Endothelial cell of umbilical vein (primary cell): ENCODE measurements at regions of chr9 and their contacts with region 1.

Region 1: DNA sequence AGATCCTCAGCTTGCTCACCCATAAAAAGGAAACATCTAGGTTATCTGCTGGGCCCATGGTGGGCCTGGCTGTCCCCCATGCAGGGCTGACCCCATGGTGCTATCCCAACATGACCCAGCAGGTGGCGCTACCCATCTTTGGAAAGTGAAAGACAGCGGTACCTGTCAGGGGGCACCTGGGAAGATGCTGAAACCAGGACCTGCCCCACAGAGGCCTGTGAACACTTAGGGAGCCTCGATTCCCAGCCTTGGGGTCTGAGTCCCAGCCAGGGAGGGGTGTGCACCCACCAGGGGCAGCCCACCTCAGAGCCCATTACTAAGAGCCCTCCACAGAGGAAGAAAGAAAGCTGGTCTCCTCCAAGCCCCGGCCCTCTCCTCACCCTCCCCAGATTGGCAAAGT is 46.6 kb upstream of the IPPK start:
- DNase-seq: peak; percentile 50
- H3K4me3 ChIP-seq: no peak overlapping the region
- H3K27ac ChIP-seq: no peak overlapping the region
- H3K4me1 ChIP-seq: peaks cover 5% of the 10 kb centered on the region
- H3K27me3 ChIP-seq: no peaks in the 10 kb centered on the region
- CTCF ChIP-seq: peak; percentile 87 to 89
- POLR2A ChIP-seq: no peak

Region 2: DNA sequence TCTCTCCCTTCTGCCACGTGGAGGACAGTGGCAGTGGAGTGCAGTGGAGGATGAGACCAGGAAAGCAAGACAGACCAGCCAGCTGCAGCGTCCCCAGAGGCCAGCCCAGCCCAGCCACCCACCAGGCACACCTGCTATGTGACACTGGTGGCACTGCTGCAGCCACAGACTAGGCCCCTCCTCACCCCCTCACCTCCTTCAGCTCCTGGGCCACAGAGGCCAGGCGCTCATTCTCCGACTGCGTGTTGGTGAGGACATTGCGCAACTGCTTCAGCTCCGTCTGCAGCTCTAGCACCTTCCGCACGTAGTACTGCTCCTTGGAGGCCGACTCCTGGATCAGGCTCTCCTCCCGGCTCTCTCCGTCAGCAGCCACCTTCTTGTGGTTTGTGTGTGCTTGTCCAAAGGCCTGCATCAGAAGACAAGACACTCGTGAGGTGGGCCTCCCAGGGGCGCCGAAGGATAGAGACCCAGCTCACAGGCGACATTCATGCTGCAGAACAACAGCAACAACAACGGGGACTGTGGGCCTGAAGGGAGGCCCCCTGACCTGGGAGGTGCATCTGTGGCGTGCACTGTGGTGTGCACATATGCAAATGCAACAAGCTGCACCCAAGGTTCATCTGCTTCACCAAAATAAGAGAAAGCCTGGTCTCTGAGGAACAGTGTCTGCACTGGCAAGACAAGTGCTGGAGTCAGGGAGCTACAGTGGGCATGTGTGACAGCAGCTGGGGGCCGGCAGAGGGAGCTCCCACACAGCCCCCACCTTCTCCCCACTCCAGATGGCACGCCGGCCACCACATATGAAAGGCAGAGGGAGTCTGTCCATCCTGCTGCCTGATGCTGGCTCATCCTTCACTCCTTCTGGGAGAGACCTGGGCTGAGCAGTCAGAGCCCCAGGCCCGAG is 12.5 kb after region 1 on chr9:
- CTCF ChIA-PET with region 1: interaction called, 13 read pairs
- POLR2A ChIA-PET with region 1: no interaction called
- dilution Hi-C with region 1: no loop called
- intact Hi-C with region 1: loop called (anchors 1 kb)
- DNase-seq: no peak
- H3K4me3 ChIP-seq: no peak overlapping the region
- H3K27ac ChIP-seq: no peak overlapping the region
- H3K4me1 ChIP-seq: peaks cover 11% of the 10 kb centered on the region
- H3K27me3 ChIP-seq: no peaks in the 10 kb centered on the region
- CTCF ChIP-seq: peak; percentile 14 to 44
- POLR2A ChIP-seq: no peak

Region 3: GRCh38 chr9:92781923-92782322 is 65.4 kb after region 1 on chr9:
- CTCF ChIA-PET with region 1: interaction called, 14 read pairs
- POLR2A ChIA-PET with region 1: no interaction called
- dilution Hi-C with region 1: no loop called
- intact Hi-C with region 1: no loop called
- DNase-seq: no peak
- H3K4me3 ChIP-seq: no peak overlapping the region
- H3K27ac ChIP-seq: no peak overlapping the region
- H3K4me1 ChIP-seq: no peaks in the 10 kb centered on the region
- H3K27me3 ChIP-seq: peaks cover 5 to 14% of the 10 kb centered on the region in 2 experiments
- CTCF ChIP-seq: no peak
- POLR2A ChIP-seq: no peak

Region 4: GRCh38 chr9:92790542-92791527 is 74.3 kb after region 1 on chr9:
- CTCF ChIA-PET with region 1: interaction called, 226 read pairs
- POLR2A ChIA-PET with region 1: no interaction called
- dilution Hi-C with region 1: no loop called
- intact Hi-C with region 1: loop called (anchors 1 kb)
- DNase-seq: peak; percentile 84
- H3K4me3 ChIP-seq: no peak overlapping the region
- H3K27ac ChIP-seq: no peak overlapping the region
- H3K4me1 ChIP-seq: no peaks in the 10 kb centered on the region
- H3K27me3 ChIP-seq: peaks cover 4 to 8% of the 10 kb centered on the region in 2 experiments
- CTCF ChIP-seq: peak; percentile 68 to 73
- POLR2A ChIP-seq: no peak

Region 5: DNA sequence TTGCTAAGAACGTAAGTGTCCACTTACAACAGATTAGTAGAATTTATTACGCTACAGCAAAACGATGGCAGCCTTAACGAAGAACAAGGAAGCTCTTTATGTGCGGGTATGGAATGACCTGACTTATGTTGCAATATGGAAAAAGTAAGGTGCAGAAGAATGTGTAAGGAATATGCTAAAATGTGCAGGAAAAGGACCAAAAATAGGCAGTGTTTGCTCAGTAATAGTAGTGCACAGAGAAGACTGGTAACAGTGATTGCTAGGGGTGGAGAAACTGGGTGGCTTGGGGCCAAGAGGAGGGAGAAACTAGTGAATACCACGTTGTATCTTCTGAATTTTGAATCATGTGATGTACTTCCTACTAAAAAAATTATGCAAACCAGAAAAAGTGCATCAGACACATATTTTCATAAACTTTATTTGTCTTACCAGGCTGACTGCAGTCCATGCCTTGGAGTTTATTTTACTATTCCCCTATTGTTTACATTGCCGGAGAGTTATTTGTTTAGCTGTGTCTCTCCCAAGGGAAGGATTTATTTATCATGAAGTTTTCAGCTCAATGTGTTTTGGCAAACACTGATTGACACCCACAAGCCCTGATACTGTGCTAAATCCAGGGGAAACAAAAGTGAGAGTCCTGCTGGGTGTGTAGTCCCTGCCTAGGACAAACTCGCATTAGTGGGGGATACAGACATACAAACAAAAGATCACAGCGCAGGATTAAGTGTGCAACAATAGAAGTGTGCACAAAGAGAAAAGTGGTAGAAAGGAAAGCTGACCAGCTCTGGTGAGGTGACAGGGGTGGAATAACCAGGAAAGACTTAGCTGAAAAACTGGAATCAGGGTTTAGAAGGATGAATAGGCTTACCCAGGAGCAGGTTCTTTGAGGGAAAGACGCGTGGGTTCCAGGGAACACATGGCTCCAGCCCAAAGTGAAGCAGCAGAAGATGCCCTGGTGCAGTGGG is 195.2 kb after region 1 on chr9:
- CTCF ChIA-PET with region 1: no interaction called
- POLR2A ChIA-PET with region 1: no interaction called
- dilution Hi-C with region 1: no loop called
- intact Hi-C with region 1: no loop called
- DNase-seq: no peak
- H3K4me3 ChIP-seq: no peak overlapping the region
- H3K27ac ChIP-seq: no peak overlapping the region
- H3K4me1 ChIP-seq: no peaks in the 10 kb centered on the region
- H3K27me3 ChIP-seq: no peaks in the 10 kb centered on the region
- CTCF ChIP-seq: no peak
- POLR2A ChIP-seq: no peak

Region 6: GRCh38 chr9:93252781-93253530 is 536.4 kb after region 1 on chr9:
- CTCF ChIA-PET with region 1: no interaction called
- POLR2A ChIA-PET with region 1: no interaction called
- dilution Hi-C with region 1: no loop called
- intact Hi-C with region 1: no loop called
- DNase-seq: no peak
- H3K4me3 ChIP-seq: no peak overlapping the region
- H3K27ac ChIP-seq: no peak overlapping the region
- H3K4me1 ChIP-seq: no peaks in the 10 kb centered on the region
- H3K27me3 ChIP-seq: no peaks in the 10 kb centered on the region
- CTCF ChIP-seq: no peak
- POLR2A ChIP-seq: no peak